Heart right ventricle (tissue), 16 donors: ENCODE measurements at regions of chr9 and their contacts with region 1.

Region 1: GRCh38 chr9:5186416-5187169 is 1.2 kb upstream of the INSL6 start:
- DNase-seq: peak in 1 of 2 donors; percentile 29
- ATAC-seq: peak in 6 of 8 donors; percentile 53 to 80 (median 72)
- H3K4me3 ChIP-seq: no peak overlapping the region
- H3K27ac ChIP-seq: no peak overlapping the region
- H3K4me1 ChIP-seq: no peaks in the 10 kb centered on the region
- H3K27me3 ChIP-seq: peaks cover 0 to 17% (median 0%) of the 10 kb centered on the region in 7 donors
- CTCF ChIP-seq: peak; percentile 35 to 78 (median 71)

Region 2: DNA sequence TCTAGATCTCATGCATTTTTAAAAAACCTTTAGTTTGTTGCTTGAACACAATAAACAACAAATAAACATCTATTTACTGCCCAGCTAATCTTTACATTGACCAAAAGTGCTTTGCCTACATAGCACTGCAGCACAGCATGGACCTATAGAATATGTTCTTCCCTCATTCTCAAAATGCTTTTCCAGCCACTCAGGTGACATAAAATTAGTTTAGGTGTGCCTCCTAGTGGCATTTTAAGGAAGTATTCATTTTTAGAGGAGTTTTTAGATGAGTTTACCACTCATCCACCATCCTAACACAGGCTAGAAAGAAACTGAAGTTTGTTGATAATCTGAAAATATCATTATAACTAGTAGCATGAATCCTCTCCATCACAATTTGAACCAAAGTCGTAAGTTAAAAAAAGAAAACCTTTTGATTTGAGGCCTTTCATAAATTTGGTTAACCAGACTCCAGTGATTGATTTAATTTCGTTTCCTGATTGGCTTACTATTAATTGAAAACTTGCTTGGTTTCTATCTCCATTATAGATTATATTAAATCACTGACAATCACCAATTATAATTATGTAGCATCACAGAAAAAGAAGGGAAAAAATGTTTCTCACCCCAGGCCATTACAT is 238.5 kb after region 1 on chr9:
- intact Hi-C with region 1: loop called in 3 of 10 experiments (anchors 5 to 10 kb)
- DNase-seq: no peak
- ATAC-seq: no peak
- H3K4me3 ChIP-seq: no peak overlapping the region
- H3K27ac ChIP-seq: no peak overlapping the region
- H3K4me1 ChIP-seq: no peaks in the 10 kb centered on the region
- H3K27me3 ChIP-seq: no peaks in the 10 kb centered on the region
- CTCF ChIP-seq: peak in 7 of 9 donors; percentile 30 to 57 (median 46)

Region 3: DNA sequence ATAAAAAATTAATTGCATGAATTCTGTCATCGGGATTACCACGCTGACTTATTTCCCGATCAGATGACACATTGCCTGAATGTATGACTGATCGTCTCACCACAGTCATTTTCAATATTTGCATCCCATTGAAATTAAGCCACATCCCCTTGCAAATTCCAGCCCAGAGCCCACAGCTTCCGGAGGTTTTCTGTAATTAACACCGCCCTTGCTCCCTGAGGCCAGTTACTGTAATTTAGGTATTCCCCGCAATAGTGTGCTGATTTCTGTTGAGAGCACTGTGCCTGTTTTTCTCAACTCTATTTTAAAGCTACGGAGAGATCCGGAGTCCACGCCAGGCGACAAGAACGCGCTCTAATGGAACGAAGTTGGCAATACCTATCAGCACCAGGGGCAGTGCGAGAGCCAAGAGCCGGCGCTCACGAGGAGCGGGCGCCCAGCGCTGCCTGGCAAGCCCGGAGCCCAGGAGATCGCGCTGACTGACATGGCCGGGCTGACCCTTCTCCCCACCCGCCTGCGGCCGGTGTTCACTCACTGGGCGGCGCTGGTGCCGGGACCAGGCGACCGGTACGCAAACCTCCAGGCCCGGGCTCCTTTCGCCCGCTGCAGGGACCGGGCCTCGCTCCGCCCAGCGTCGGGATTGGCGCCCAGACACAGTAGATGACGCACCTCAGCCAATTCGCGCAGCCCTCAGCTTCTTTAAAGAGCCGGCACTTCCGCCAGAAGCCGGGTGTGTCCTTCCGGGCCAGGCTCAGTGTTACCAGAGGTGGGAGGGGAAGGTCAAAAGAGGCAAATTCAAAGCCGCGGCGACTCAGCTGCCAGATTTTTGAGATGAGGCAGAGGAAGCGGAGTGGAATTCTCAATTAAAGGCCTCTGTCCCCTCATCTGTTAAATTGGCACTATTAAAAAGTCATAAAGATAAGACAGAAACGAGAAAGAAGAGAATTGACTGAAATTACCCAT is 250.9 kb after region 1 on chr9 and contains the start of gene PLGRKT:
- intact Hi-C with region 1: loop called in 5 of 10 experiments (anchors 2 to 10 kb)
- DNase-seq: peak; percentile 95
- ATAC-seq: peak; percentile 99
- H3K4me3 ChIP-seq: peak within 1 kb of the TSS; percentile 39 to 87 (median 67)
- H3K27ac ChIP-seq: peak within 1 kb of the TSS; percentile 41 to 97 (median 92)
- H3K4me1 ChIP-seq: peaks cover 0 to 26% (median 22%) of the 10 kb centered on the region in 9 donors
- H3K27me3 ChIP-seq: no peaks in the 10 kb centered on the region
- CTCF ChIP-seq: peak in 6 of 9 donors; percentile 10 to 53 (median 33)
- total RNA-seq, gene PLGRKT: 30.1 to 53.0 (median 36.3) TPM

Region 4: DNA sequence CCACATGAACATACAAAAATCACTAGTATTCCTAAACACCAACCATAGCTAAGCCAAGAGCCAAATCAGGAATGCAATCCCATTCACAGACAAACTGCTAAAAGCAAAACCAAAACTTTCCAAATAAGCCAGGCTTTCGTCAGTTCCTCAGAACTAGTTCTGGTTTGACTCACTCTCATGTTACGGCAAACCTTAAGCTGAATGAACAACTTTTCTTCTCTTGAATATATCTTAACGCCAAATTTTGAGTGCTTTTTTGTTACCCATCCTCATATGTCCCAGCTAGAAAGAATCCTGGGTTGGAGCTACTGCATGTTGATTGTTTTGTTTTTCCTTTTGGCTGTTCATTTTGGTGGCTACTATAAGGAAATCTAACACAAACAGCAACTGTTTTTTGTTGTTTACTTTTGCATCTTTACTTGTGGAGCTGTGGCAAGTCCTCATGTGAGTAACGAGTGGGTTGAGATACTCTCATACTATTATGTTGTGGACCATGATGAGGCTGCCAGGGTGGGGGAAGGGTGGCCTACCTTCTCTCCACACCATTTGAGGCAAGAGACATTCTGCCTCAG is 323.9 kb after region 1 on chr9 and contains the start of gene PDCD1LG2:
- intact Hi-C with region 1: no loop called
- DNase-seq: no peak
- ATAC-seq: peak in 7 of 8 donors; percentile 28 to 75 (median 59)
- H3K4me3 ChIP-seq: peak within 1 kb of the TSS in 9 of 10 donors; percentile 0 to 51 (median 47)
- H3K27ac ChIP-seq: peak within 1 kb of the TSS; percentile 24 to 85 (median 74)
- H3K4me1 ChIP-seq: peaks cover 0 to 68% (median 40%) of the 10 kb centered on the region in 9 donors
- H3K27me3 ChIP-seq: no peaks in the 10 kb centered on the region
- CTCF ChIP-seq: no peak
- total RNA-seq, gene PDCD1LG2: 0.72 to 8.6 (median 1.3) TPM

Region 5: GRCh38 chr9:5593904-5594303 is 407.3 kb after region 1 on chr9:
- intact Hi-C with region 1: loop called in 8 of 10 experiments (anchors 2 to 5 kb)
- DNase-seq: no peak
- ATAC-seq: no peak
- H3K4me3 ChIP-seq: no peak overlapping the region
- H3K27ac ChIP-seq: no peak overlapping the region
- H3K4me1 ChIP-seq: peaks cover 0 to 20% (median 4%) of the 10 kb centered on the region in 9 donors
- H3K27me3 ChIP-seq: no peaks in the 10 kb centered on the region
- CTCF ChIP-seq: no peak

Region 6: DNA sequence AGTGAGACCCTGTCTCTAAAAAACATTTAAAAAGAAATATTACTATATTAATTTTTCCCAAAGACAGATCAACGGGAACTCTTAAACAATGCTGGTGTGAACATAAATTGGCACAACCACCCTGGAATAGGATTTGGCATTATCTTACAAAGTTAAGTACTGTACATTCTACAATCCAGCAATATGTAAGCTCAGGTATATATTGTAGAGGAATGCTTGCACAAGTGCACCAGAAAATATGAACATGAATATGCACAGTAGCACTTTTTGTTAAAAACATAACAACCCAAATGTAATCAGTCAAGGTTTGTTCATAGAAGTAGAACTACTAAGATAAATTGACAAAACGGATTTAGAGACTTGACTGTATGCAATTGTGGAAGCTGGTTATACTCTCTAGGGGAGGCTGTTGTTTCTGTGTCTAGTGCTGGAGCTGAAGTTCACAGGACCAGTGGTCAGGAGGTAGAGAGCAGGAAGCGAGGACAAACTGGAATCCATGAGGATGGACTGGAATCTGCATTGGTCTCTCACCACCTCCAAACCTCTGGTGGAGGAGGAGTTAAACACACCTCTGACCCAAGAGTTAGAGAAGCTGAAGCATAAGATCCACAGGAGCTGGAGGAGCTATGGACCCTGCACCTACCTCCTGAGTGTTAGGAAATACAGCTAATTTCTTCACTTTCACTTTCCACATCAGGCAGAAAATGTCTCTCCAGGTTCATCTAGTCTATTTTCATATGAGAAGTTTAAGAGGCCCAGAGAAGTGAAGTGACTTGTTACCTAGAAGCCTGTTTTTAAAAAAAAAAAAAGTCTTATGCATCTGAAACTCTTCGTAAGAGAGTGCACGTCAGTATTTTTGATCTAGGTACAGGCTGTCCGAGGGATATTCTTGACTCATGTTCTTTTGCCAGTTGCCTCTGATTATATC is 422.0 kb after region 1 on chr9:
- intact Hi-C with region 1: loop called in 2 of 10 experiments (anchors 5 kb)
- DNase-seq: no peak
- ATAC-seq: peak in 7 of 8 donors; percentile 79 to 96 (median 85)
- H3K4me3 ChIP-seq: peak overlapping the region; percentile 18 to 53 (median 49)
- H3K27ac ChIP-seq: peak overlapping the region; percentile 51 to 78 (median 73)
- H3K4me1 ChIP-seq: peaks cover 0 to 26% (median 11%) of the 10 kb centered on the region in 9 donors
- H3K27me3 ChIP-seq: no peaks in the 10 kb centered on the region
- CTCF ChIP-seq: peak in 4 of 9 donors; percentile 3 to 30 (median 27)